Natural killer cell (primary cell): ENCODE measurements at regions of chr20 and their contacts with region 1.

Region 1: DNA sequence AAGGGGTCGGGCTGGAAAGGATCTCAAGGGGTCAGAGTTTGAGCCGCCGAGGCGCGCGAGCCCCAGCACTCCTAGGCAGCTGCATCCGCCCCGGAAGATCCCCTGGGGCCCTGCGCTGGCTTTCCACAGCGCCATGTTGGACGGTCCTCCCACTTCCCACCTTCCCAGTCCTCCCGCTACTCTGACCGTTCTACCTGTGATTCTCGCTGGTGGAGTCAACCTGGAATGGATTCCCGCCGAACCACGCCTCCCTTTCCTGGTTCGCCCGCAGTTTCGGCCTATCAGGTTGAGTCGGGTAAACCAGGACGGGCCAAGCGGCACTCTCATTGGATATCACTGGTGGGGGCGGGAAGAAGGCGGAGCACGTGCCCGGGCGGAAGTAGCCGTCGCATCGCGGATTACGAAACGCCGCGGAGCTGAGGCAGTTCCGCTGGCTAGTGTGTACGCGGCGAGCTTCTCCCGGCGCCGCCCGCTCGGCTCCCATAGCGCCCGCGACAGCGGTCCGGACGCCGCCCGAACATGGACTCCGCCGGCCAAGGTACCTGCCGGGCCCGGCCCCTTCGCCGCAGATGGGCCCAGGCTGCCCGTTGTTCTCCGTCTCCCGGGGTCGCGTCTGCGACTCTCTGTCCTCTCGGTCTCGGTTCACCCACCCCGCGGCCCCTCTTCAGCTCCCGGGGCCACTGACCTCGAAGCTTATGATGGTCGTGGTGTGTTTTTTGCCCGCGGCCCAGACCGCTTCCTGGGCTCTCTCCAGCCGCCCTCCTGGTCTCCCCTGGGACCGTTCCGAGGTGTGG is at the start of gene TPD52L2:
- DNase-seq: peak; percentile 95 to 99
- ATAC-seq: peak; percentile 84 to 93 (median 88)
- H3K4me3 ChIP-seq: peak within 1 kb of the TSS; percentile 99
- H3K4me3 Mint-ChIP-seq: peak within 1 kb of the TSS; percentile 96
- H3K27ac ChIP-seq: peak within 1 kb of the TSS; percentile 85
- H3K27ac Mint-ChIP-seq: peak within 1 kb of the TSS; percentile 91 to 95
- H3K4me1 ChIP-seq: peaks cover 38% of the 10 kb centered on the region
- H3K4me1 Mint-ChIP-seq: peaks cover 26 to 36% of the 10 kb centered on the region in 2 donors
- H3K27me3 ChIP-seq: no peaks in the 10 kb centered on the region
- H3K27me3 Mint-ChIP-seq: no peaks in the 10 kb centered on the region
- CTCF ChIP-seq: no peak
- total RNA-seq, gene TPD52L2: 36.8 to 47.2 (median 45.1) TPM

Region 2: GRCh38 chr20:63537525-63538203 is 327.4 kb before region 1 on chr20:
- intact Hi-C with region 1: loop called (anchors 2 kb)
- DNase-seq: peak; percentile 95 to 98
- ATAC-seq: peak; percentile 93 to 97 (median 93)
- H3K4me3 ChIP-seq: peak overlapping the region; percentile 42
- H3K4me3 Mint-ChIP-seq: peak overlapping the region; percentile 80
- H3K27ac ChIP-seq: peak overlapping the region; percentile 88
- H3K27ac Mint-ChIP-seq: peak overlapping the region; percentile 77 to 91
- H3K4me1 ChIP-seq: peaks cover 32% of the 10 kb centered on the region
- H3K4me1 Mint-ChIP-seq: peaks cover 0 to 20% of the 10 kb centered on the region in 2 donors
- H3K27me3 ChIP-seq: no peaks in the 10 kb centered on the region
- H3K27me3 Mint-ChIP-seq: no peaks in the 10 kb centered on the region
- CTCF ChIP-seq: peak; percentile 99

Region 3: GRCh38 chr20:63657937-63658748 is 206.9 kb before region 1 on chr20 and contains the start of gene RTEL1:
- intact Hi-C with region 1: loop called (anchors 1 kb)
- DNase-seq: peak; percentile 92 to 94
- ATAC-seq: peak; percentile 89 to 92 (median 89)
- H3K4me3 ChIP-seq: peak within 1 kb of the TSS; percentile 76
- H3K4me3 Mint-ChIP-seq: peak within 1 kb of the TSS; percentile 97
- H3K27ac ChIP-seq: peak within 1 kb of the TSS; percentile 61
- H3K27ac Mint-ChIP-seq: peak within 1 kb of the TSS; percentile 92 to 95
- H3K4me1 ChIP-seq: peaks cover 36% of the 10 kb centered on the region
- H3K4me1 Mint-ChIP-seq: peaks cover 22 to 31% of the 10 kb centered on the region in 2 donors
- H3K27me3 ChIP-seq: peaks cover 12% of the 10 kb centered on the region
- H3K27me3 Mint-ChIP-seq: peaks cover 0 to 7% of the 10 kb centered on the region in 2 donors
- CTCF ChIP-seq: no peak
- total RNA-seq, gene RTEL1: 36.3 to 52.0 (median 40.4) TPM

Region 4: GRCh38 chr20:63707549-63708300 is 157.3 kb before region 1 on chr20 and contains the starts of genes ARFRP1 and ZGPAT:
- intact Hi-C with region 1: loop called (anchors 1 kb)
- DNase-seq: peak; percentile 84 to 93
- ATAC-seq: peak; percentile 85 to 92 (median 88)
- H3K4me3 ChIP-seq: peak within 1 kb of the TSS; percentile 43
- H3K4me3 Mint-ChIP-seq: peak within 1 kb of the TSS; percentile 84
- H3K27ac ChIP-seq: peak within 1 kb of the TSS; percentile 78
- H3K27ac Mint-ChIP-seq: peak within 1 kb of the TSS; percentile 83 to 87
- H3K4me1 ChIP-seq: peaks cover 29% of the 10 kb centered on the region
- H3K4me1 Mint-ChIP-seq: peaks cover 37 to 42% of the 10 kb centered on the region in 2 donors
- H3K27me3 ChIP-seq: no peaks in the 10 kb centered on the region
- H3K27me3 Mint-ChIP-seq: no peaks in the 10 kb centered on the region
- CTCF ChIP-seq: no peak
- total RNA-seq, gene ARFRP1: 43.9 to 55.8 (median 50.6) TPM
- total RNA-seq, gene ZGPAT: 39.3 to 47.7 (median 46.1) TPM

Region 5: GRCh38 chr20:63955827-63956663 is 91.0 kb after region 1 on chr20 and contains the start of gene UCKL1:
- intact Hi-C with region 1: loop called (anchors 1 kb)
- DNase-seq: peak; percentile 88 to 93
- ATAC-seq: peak; percentile 86 to 94 (median 86)
- H3K4me3 ChIP-seq: peak within 1 kb of the TSS; percentile 65
- H3K4me3 Mint-ChIP-seq: peak within 1 kb of the TSS; percentile 87
- H3K27ac ChIP-seq: peak within 1 kb of the TSS; percentile 34
- H3K27ac Mint-ChIP-seq: peak within 1 kb of the TSS; percentile 59 to 73
- H3K4me1 ChIP-seq: peaks cover 33% of the 10 kb centered on the region
- H3K4me1 Mint-ChIP-seq: peaks cover 6 to 17% of the 10 kb centered on the region in 2 donors
- H3K27me3 ChIP-seq: no peaks in the 10 kb centered on the region
- H3K27me3 Mint-ChIP-seq: no peaks in the 10 kb centered on the region
- CTCF ChIP-seq: no peak
- total RNA-seq, gene UCKL1: 49.9 to 58.1 (median 49.9) TPM